ENCODE measurements at regions of chr6 and their contacts with region 1.

Region 1: GRCh38 chr6:99868074-99868702 is 125.8 kb downstream of the MCHR2 start:
- DNase-seq: no peak
- H3K4me3 ChIP-seq: no peak overlapping the region
- H3K27me3 ChIP-seq: peaks cover 4% of the 10 kb centered on the region; the same call in 1 of the 2 replicates
- CTCF ChIP-seq: peak; percentile 80

Region 2: GRCh38 chr6:99668036-99668705 is 200.0 kb before region 1 on chr6:
- CTCF ChIA-PET with region 1: no interaction called
- POLR2A ChIA-PET with region 1: no interaction called
- DNase-seq: no peak
- H3K4me3 ChIP-seq: no peak overlapping the region
- H3K27me3 ChIP-seq: 0 out of 2 replicates have a peak, but pooled peaks cover 1% of the 10 kb centered on the region
- CTCF ChIP-seq: no peak

Region 3: GRCh38 chr6:99905209-99906106 is 37.3 kb after region 1 on chr6:
- CTCF ChIA-PET with region 1: interaction called, 49 read pairs
- POLR2A ChIA-PET with region 1: no interaction called
- DNase-seq: peak; percentile 15
- H3K4me3 ChIP-seq: no peak overlapping the region
- H3K27me3 ChIP-seq: no peaks in the 10 kb centered on the region
- CTCF ChIP-seq: peak; percentile 80

Region 4: GRCh38 chr6:100093405-100093804 is 225.2 kb after region 1 on chr6:
- CTCF ChIA-PET with region 1: interaction called, 153 read pairs
- POLR2A ChIA-PET with region 1: no interaction called
- DNase-seq: no peak
- H3K4me3 ChIP-seq: no peak overlapping the region
- H3K27me3 ChIP-seq: no peaks in the 10 kb centered on the region
- CTCF ChIP-seq: no peak

Region 5: GRCh38 chr6:100105138-100105753 is 237.1 kb after region 1 on chr6:
- CTCF ChIA-PET with region 1: interaction called, 153 read pairs
- POLR2A ChIA-PET with region 1: no interaction called
- DNase-seq: no peak
- H3K4me3 ChIP-seq: no peak overlapping the region
- H3K27me3 ChIP-seq: no peaks in the 10 kb centered on the region
- CTCF ChIP-seq: no peak

Region 6: DNA sequence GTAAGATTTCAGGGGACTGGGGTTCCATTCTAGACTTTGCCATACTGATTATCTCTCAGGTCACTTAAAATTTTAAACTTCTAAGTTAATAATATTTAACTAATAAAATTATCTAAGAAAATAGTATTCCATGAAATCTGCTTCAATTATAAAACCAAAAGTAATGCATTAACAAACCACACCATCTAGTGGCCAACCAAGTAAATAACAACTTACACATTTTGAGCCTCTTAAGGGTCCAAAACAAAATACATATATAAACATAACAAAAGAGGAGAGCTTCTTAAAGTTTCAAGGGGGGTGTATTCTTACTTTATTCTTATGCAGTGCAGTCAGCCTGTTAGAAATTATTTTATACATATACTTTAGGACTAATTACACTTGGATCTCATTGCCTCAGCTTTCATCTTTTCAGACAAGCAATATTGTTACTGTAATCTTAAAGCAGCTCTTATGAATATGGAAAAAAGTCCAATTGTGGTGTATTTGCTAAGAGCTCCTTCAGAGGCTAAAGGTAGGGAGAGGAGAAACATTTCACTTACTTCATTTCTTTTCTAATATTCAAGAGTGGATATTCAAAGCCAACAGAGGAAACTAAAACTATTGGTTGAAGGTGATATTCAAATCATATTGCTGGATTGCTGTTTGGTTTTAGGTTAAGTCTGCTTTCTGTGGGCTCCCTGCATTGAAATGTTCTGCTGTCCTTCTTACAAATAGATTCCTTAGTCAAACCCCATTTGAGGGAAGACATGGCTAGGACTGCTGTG is 796.3 kb after region 1 on chr6:
- CTCF ChIA-PET with region 1: interaction called, 13 read pairs
- POLR2A ChIA-PET with region 1: no interaction called
- DNase-seq: no peak
- H3K4me3 ChIP-seq: no peak overlapping the region
- H3K27me3 ChIP-seq: no peaks in the 10 kb centered on the region
- CTCF ChIP-seq: peak; percentile 59

Measured in BJ (cell line).